Activated T-helper 2 cell treated with anti-CD3 and anti-CD28 coated beads, Interferon-gamma antibody, Interleukin-2, Interleukin-4, amounts not matched to agents 10 μg/mL and 5 μg/mL and 100 μg/mL, durations not matched to agents 14 hours and 24 hours and 36 hours (primary cell): ENCODE measurements at regions of chr10 and their contacts with region 1.

Region 1: DNA sequence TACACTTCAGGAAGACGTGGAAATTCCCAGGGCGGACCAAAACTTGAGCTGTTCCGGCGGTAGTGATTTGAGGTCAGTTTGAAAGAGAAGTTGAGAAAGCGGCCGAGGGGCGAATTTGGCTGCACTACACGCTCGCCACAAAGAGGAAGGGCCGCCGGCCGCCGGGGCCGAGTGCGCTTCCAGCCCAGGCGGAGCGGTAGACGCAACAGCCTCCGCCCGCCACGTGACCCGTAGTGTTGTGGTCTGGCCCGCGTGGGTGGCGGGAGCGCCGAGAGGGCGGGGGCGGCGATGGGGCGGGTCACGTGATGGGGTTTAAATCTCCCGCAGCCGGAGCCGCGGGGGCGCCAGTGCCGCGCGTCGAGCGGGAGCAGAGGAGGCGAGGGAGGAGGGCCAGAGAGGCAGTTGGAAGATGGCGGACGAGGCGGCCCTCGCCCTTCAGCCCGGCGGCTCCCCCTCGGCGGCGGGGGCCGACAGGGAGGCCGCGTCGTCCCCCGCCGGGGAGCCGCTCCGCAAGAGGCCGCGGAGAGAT is at the start of gene SIRT1:
- DNase-seq: peak; percentile 93
- H3K4me3 Mint-ChIP-seq: peak within 1 kb of the TSS; percentile 91
- H3K27ac Mint-ChIP-seq: peak within 1 kb of the TSS; percentile 97
- H3K4me1 Mint-ChIP-seq: peaks cover 19% of the 10 kb centered on the region
- H3K27me3 Mint-ChIP-seq: peaks cover 2% of the 10 kb centered on the region
- total RNA-seq, gene SIRT1: 25.3 and 25.6 TPM in 2 replicates

Region 2: GRCh38 chr10:67849331-67850011 is 34.9 kb before region 1 on chr10:
- intact Hi-C with region 1: loop called (anchors 1 kb)
- DNase-seq: peak; percentile 90
- H3K4me3 Mint-ChIP-seq: peak overlapping the region; percentile 92
- H3K27ac Mint-ChIP-seq: peak overlapping the region; percentile 94
- H3K4me1 Mint-ChIP-seq: peaks cover 8% of the 10 kb centered on the region
- H3K27me3 Mint-ChIP-seq: no peaks in the 10 kb centered on the region